Calu3 (cell line): ENCODE measurements at regions of chr18 and their contacts with region 1.

Region 1: GRCh38 chr18:32552421-32553030 is 81.8 kb upstream of the GAREM1 start:
- DNase-seq: peak; percentile 83
- H3K4me3 Mint-ChIP-seq: no peak overlapping the region
- H3K27ac Mint-ChIP-seq: no peak overlapping the region
- H3K4me1 Mint-ChIP-seq: peaks cover 12% of the 10 kb centered on the region
- H3K27me3 Mint-ChIP-seq: no peaks in the 10 kb centered on the region
- CTCF ChIP-seq: peak; percentile 76

Region 2: GRCh38 chr18:32158108-32158624 is 394.4 kb before region 1 on chr18:
- CTCF ChIA-PET with region 1: interaction called, 50 read pairs
- intact Hi-C with region 1: loop called (anchors 1 kb)
- DNase-seq: peak; percentile 78
- H3K4me3 Mint-ChIP-seq: peak overlapping the region; percentile 71
- H3K27ac Mint-ChIP-seq: no peak overlapping the region
- H3K4me1 Mint-ChIP-seq: peaks cover 20% of the 10 kb centered on the region
- H3K27me3 Mint-ChIP-seq: no peaks in the 10 kb centered on the region
- CTCF ChIP-seq: peak; percentile 80

Region 3: GRCh38 chr18:32271672-32272208 is 280.8 kb before region 1 on chr18:
- CTCF ChIA-PET with region 1: interaction called, 15 read pairs
- intact Hi-C with region 1: loop called (anchors 1 kb)
- DNase-seq: peak; percentile 61
- H3K4me3 Mint-ChIP-seq: no peak overlapping the region
- H3K27ac Mint-ChIP-seq: no peak overlapping the region
- H3K4me1 Mint-ChIP-seq: peaks cover 17% of the 10 kb centered on the region
- H3K27me3 Mint-ChIP-seq: no peaks in the 10 kb centered on the region
- CTCF ChIP-seq: peak; percentile 65

Region 4: DNA sequence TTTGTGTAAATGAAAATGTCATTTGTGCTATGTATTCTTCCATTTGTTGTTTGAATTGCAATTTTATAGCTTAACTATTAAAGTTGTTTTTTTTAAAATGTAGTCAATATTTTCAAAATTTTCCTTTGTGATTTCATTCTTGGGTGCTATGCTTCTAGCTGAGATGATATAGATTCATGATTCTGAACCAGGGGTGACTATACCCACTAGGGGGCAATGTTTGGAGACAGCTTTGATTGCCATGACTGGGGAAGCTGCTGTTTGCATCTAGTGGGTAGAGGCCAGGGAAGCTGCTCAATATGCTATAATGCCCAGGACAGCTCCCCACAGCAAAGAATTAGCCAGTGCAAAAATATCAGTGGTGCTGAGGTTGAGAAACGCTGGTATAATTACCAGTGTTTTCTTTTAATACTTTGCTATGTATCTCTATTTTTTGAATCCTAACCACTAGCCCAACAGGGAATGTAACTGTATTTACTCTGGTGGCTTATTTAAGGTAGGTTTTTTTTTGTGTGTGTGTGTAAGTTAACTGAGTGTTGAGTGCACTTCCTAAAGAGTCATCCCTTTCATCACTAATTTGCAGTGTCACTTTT is 262.9 kb before region 1 on chr18:
- CTCF ChIA-PET with region 1: interaction called, 11 read pairs
- intact Hi-C with region 1: loop called (anchors 5 kb)
- DNase-seq: peak; percentile 77
- H3K4me3 Mint-ChIP-seq: no peak overlapping the region
- H3K27ac Mint-ChIP-seq: no peak overlapping the region
- H3K4me1 Mint-ChIP-seq: no peaks in the 10 kb centered on the region
- H3K27me3 Mint-ChIP-seq: no peaks in the 10 kb centered on the region
- CTCF ChIP-seq: peak; percentile 57

Region 5: GRCh38 chr18:32383050-32383819 is 169.3 kb before region 1 on chr18:
- CTCF ChIA-PET with region 1: interaction called, 6 read pairs
- intact Hi-C with region 1: loop called (anchors 10 kb)
- DNase-seq: peak; percentile 53
- H3K4me3 Mint-ChIP-seq: peak overlapping the region; percentile 43
- H3K27ac Mint-ChIP-seq: peak overlapping the region; percentile 82
- H3K4me1 Mint-ChIP-seq: peaks cover 64% of the 10 kb centered on the region
- H3K27me3 Mint-ChIP-seq: no peaks in the 10 kb centered on the region
- CTCF ChIP-seq: no peak